CD4-positive, alpha-beta memory T cell (primary cell): ENCODE measurements at regions of chr3 and their contacts with region 1.

Region 1: DNA sequence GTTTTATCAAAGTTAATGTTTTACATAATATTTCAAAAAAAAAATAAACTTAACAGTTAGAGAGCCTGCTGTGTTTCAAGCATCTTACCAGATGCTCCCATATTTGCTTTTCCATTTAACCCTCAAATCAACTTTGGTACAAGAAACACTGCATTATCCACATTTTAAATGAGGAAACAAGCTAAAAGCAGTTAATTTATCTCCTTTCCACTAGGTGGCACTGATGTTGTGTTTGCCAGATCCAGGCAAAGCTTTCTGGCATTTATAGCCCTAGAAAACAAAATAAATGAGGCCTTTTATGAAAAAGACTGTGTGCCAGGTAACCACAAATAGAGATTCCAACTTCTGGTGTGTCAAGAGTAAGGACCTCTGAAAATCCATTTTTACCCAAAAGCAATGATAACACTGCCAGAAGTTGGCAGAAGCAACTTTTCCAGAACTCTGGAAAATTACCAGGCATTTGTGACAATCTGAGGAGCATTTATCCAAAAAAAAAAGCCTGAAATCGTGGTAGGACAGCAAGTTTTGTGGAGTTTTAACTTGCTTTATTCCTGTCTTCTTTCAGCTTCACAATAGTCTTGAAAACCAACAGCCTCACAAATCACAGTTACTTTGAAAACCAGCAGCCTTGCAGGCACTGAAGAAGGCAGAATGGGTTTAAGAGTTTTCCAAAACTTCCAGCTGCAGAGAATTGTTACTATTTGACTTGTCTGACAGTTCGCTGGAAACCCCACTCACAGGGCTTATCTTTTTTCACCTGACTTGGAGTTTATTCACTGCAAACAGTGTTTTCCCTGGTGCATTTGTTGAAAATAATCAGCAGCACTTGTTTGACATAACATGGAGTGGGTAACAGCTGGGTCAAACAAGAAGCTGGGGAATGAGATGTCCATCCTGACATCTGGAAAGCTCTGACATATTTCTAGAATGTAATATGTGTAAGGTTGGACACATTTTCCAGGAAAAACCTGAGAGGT is 9.2 kb downstream of the FAM162A start:
- DNase-seq: peak; percentile 40 to 55 (median 47)
- H3K4me3 ChIP-seq: no peak overlapping the region
- H3K4me3 Mint-ChIP-seq: no peak overlapping the region
- H3K27ac ChIP-seq: no peak overlapping the region
- H3K27ac Mint-ChIP-seq: peak overlapping the region in 1 of 7 donors; percentile 48
- H3K4me1 ChIP-seq: no peaks in the 10 kb centered on the region
- H3K4me1 Mint-ChIP-seq: peaks cover 4 to 7% (median 5%) of the 10 kb centered on the region in 4 donors
- H3K27me3 ChIP-seq: no peaks in the 10 kb centered on the region
- H3K27me3 Mint-ChIP-seq: no peaks in the 10 kb centered on the region

Region 2: DNA sequence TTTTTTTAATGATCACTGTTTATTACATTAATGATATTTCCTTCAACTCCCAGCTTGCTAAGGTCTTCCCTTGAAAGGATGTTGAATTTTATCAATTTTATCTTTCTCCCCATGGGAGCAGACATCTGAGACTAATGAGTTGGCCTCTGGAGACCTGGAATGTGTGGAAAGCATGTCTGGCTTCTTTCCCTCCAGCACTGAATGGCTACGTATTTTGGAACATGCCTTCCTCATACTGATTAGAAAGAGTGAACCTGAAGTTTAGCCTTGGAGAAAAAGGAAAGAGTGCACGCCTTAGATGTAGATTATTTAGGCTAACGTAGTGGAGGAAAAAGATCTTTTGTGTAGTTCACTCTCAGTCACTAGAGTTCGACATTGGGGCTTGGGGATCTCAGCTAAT is 184.6 kb before region 1 on chr3:
- CTCF ChIA-PET with region 1: no interaction called
- POLR2A ChIA-PET with region 1: no interaction called
- intact Hi-C with region 1: no loop called
- DNase-seq: no peak
- H3K4me3 ChIP-seq: no peak overlapping the region
- H3K4me3 Mint-ChIP-seq: no peak overlapping the region
- H3K27ac ChIP-seq: no peak overlapping the region
- H3K27ac Mint-ChIP-seq: no peak overlapping the region
- H3K4me1 ChIP-seq: no peaks in the 10 kb centered on the region
- H3K4me1 Mint-ChIP-seq: no peaks in the 10 kb centered on the region
- H3K27me3 ChIP-seq: no peaks in the 10 kb centered on the region
- H3K27me3 Mint-ChIP-seq: peaks cover 4 to 12% of the 10 kb centered on the region in 2 donors

Region 3: GRCh38 chr3:122365073-122365472 is 28.1 kb before region 1 on chr3:
- CTCF ChIA-PET with region 1: no interaction called
- POLR2A ChIA-PET with region 1: no interaction called
- intact Hi-C with region 1: no loop called
- DNase-seq: no peak
- H3K4me3 ChIP-seq: no peak overlapping the region
- H3K4me3 Mint-ChIP-seq: no peak overlapping the region
- H3K27ac ChIP-seq: no peak overlapping the region
- H3K27ac Mint-ChIP-seq: no peak overlapping the region
- H3K4me1 ChIP-seq: no peaks in the 10 kb centered on the region
- H3K4me1 Mint-ChIP-seq: peaks cover 0 to 3% (median under 1%) of the 10 kb centered on the region in 4 donors
- H3K27me3 ChIP-seq: no peaks in the 10 kb centered on the region
- H3K27me3 Mint-ChIP-seq: no peaks in the 10 kb centered on the region

Region 4: DNA sequence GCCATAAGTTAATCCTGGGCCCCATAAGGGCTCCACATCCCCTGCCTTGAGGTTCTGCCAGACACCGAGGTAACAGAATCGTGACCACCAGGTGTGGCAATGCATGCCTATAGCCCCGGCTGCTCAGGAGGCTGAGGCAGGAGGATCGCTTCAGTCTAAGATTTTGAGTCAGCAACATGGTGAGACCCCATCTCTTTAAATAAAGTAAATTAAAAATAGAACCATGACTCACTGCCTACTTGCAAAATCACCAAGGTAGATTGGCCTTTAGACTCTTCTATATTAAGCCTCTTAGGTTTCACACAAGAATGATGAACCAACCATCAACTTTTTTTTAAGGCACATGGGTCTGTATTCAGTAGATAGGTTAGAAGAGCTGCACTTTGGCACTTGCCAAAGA is 13.0 kb after region 1 on chr3:
- CTCF ChIA-PET with region 1: interaction called, 19 read pairs
- POLR2A ChIA-PET with region 1: interaction called, 3 read pairs
- intact Hi-C with region 1: no loop called
- DNase-seq: no peak
- H3K4me3 ChIP-seq: no peak overlapping the region
- H3K4me3 Mint-ChIP-seq: no peak overlapping the region
- H3K27ac ChIP-seq: no peak overlapping the region
- H3K27ac Mint-ChIP-seq: peak overlapping the region in 1 of 7 donors; percentile 25
- H3K4me1 ChIP-seq: no peaks in the 10 kb centered on the region
- H3K4me1 Mint-ChIP-seq: peaks cover 0 to 10% (median 3%) of the 10 kb centered on the region in 4 donors
- H3K27me3 ChIP-seq: no peaks in the 10 kb centered on the region
- H3K27me3 Mint-ChIP-seq: no peaks in the 10 kb centered on the region

Region 5: GRCh38 chr3:122564155-122564912 is 171.2 kb after region 1 on chr3 and contains the starts of genes DTX3L and PARP9:
- CTCF ChIA-PET with region 1: interaction called, 5 read pairs
- POLR2A ChIA-PET with region 1: interaction called, 4 read pairs
- intact Hi-C with region 1: loop called (anchors 1 kb)
- DNase-seq: peak; percentile 79 to 87 (median 81)
- H3K4me3 ChIP-seq: peak within 1 kb of the TSS; percentile 78 to 94
- H3K4me3 Mint-ChIP-seq: peak within 1 kb of the TSS; percentile 92 to 98 (median 96)
- H3K27ac ChIP-seq: peak within 1 kb of the TSS; percentile 95
- H3K27ac Mint-ChIP-seq: peak within 1 kb of the TSS; percentile 90 to 99 (median 97)
- H3K4me1 ChIP-seq: peaks cover 70% of the 10 kb centered on the region
- H3K4me1 Mint-ChIP-seq: peaks cover 55 to 85% (median 70%) of the 10 kb centered on the region in 4 donors
- H3K27me3 ChIP-seq: no peaks in the 10 kb centered on the region
- H3K27me3 Mint-ChIP-seq: no peaks in the 10 kb centered on the region
- total RNA-seq, gene DTX3L: 49.3 to 51.0 TPM
- total RNA-seq, gene PARP9: 24.0 to 26.0 TPM